Mammary epithelial cell (primary cell): ENCODE measurements at regions of chr10 and their contacts with region 1.

Region 1: GRCh38 chr10:57008189-57008588 is 647.1 kb upstream of the ZWINT start:
- DNase-seq: no peak
- H3K4me3 ChIP-seq: no peak overlapping the region
- H3K27ac ChIP-seq: no peak overlapping the region
- H3K4me1 ChIP-seq: no peaks in the 10 kb centered on the region
- H3K27me3 ChIP-seq: no peaks in the 10 kb centered on the region
- CTCF ChIP-seq: no peak

Region 2: DNA sequence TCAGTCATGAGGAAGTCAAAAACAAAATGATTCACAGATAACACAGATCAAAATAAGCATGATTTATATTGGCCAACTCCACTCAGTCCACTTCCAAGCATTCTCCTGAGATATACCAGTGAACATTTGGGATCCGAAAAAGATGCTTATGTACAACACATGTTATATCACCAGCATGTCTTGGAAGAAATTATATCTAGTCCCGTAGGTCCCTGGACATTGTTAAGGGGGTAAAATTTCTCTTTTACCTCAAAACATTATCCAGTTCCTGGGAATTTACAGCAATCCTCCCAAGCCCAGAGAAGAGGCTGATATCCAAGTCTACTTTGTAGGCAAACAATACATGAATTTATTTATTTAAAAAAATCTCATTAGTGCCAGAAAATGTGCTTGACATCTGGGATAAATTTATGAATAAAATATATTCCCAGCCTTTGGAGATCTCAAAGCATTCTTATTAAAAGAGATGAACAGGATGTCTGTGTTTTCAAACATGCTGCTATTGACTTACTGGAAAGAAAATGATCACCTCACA is 64.9 kb before region 1 on chr10:
- CTCF ChIA-PET with region 1: no interaction called
- dilution Hi-C with region 1: loop called (anchors 5 kb)
- in situ Hi-C with region 1: no loop called
- intact Hi-C with region 1: no loop called
- DNase-seq: no peak
- H3K4me3 ChIP-seq: no peak overlapping the region
- H3K27ac ChIP-seq: no peak overlapping the region
- H3K4me1 ChIP-seq: no peaks in the 10 kb centered on the region
- H3K27me3 ChIP-seq: no peaks in the 10 kb centered on the region
- CTCF ChIP-seq: no peak

Region 3: DNA sequence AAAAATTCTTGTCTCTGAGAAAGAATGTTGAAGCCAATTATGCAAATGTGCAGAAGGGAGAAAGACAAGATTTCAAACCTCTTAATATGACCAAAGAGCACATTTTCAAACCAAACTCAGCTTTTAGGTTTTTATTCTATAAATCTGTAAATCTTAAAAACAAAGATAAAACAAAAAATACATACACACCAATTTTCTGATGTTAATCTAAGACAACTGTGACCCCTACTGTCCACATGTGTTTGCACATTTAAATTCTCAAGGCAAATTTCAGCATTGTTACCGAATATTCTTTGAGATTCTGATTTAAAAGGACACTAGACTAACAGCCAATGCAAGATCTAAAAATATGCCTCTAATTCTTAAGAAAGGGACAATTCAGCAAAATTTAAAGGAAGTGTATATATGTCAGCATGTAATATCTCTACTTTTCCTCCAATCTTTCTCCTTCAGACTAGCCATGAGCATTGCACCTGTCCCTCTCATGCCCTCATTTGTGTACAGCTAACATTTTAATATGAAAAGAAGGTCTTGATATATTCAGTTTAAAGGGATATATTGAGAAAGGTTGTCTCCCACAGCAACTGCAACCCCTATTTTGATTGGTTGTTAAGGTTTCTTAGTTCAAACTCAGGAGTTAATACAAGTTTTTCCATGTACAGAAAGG is 841.6 kb after region 1 on chr10:
- CTCF ChIA-PET with region 1: no interaction called
- dilution Hi-C with region 1: no loop called
- in situ Hi-C with region 1: no loop called
- intact Hi-C with region 1: no loop called
- DNase-seq: peak; percentile 13
- H3K4me3 ChIP-seq: no peak overlapping the region
- H3K27ac ChIP-seq: no peak overlapping the region
- H3K4me1 ChIP-seq: no peaks in the 10 kb centered on the region
- H3K27me3 ChIP-seq: no peaks in the 10 kb centered on the region
- CTCF ChIP-seq: peak; percentile 50 to 53